ENCODE measurements at regions of chr6 and their contacts with region 1.

Region 1: DNA sequence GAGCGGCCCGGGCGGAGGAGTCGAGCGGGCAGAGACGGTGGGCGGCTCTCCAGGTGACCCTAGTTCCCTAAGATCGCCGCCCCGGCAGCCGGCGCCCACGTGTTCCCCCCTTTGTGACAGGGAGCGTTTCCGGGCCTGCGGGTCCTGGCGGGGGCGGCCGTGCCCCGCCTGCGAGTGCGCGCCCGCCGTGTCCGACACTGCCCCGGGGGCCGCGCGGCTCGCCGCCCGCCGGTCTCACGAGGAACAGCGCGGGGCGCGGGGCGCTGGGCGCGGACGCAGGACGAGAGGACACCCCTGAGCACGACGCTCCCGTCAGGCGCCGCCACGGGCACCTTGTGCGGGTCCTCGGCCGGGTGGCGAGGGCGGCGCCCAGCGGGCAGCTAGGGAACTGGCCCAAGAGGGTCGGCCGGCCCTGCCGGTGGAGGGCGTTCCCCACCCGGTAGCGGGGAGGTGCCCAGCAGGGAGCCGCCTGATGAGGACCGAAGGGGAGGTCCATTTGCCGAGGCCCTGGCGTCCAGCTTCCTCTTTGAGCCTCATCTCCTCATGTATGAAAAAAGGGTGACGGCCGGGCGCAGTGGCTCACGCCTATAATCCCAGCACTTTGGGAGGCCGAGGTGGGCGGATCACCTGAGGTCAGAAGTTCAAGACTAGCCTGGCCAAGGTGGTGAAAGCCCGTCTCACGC is at the start of gene VARS1:
- H3K4me3 Mint-ChIP-seq: peak within 1 kb of the TSS; percentile 95
- H3K27ac Mint-ChIP-seq: peak within 1 kb of the TSS; percentile 96
- H3K4me1 Mint-ChIP-seq: peaks cover 42% of the 10 kb centered on the region
- H3K27me3 Mint-ChIP-seq: no peaks in the 10 kb centered on the region

Region 2: GRCh38 chr6:31702819-31703522 is 92.8 kb before region 1 on chr6 and contains the start of gene ABHD16A:
- intact Hi-C with region 1: no loop called
- H3K4me3 Mint-ChIP-seq: peak within 1 kb of the TSS; percentile 98
- H3K27ac Mint-ChIP-seq: peak within 1 kb of the TSS; percentile 93
- H3K4me1 Mint-ChIP-seq: peaks cover 39% of the 10 kb centered on the region
- H3K27me3 Mint-ChIP-seq: no peaks in the 10 kb centered on the region

Region 3: DNA sequence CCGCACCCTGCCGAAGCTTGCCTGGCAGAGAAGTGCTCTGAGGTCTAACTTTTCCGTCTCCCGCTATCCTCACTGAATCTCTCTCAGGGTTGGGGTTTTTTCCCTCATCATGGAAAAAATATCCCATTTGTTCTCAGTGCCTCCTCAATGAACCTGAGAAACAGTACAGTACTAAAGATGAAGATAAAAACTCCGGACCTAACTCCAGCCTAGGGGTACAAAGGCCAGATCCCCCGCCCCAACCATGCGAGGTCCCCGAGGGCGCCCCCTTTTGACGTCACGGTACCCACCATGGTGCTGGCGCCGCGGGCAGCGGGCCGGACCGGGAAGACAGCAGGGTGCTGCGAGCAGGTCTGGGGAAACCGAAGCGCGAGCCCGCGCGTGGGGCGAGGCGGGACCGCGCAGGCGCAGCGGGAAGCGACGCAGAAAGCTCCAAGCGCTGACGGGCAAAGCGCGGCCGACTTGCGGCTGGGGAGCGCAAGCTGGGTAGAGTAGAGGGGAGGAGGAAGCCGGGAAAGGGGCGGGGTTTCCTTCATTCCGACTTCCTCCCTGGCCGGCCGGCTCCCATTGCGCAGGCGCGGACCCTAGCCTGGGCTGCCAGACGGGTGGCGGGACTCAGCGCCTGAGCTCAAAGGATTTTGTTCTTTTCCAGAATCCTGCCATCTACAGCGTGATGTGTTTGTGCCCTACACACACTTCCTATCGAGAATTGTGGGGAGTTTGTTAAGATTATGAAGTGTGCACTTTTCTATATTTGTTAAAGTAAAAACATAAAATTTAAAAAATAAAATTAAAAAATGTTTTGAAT is 10.9 kb after region 1 on chr6 and contains the start of gene LSM2:
- intact Hi-C with region 1: loop called (anchors 1 kb)
- H3K4me3 Mint-ChIP-seq: peak within 1 kb of the TSS; percentile 79
- H3K27ac Mint-ChIP-seq: peak within 1 kb of the TSS; percentile 93
- H3K4me1 Mint-ChIP-seq: peaks cover 28% of the 10 kb centered on the region
- H3K27me3 Mint-ChIP-seq: no peaks in the 10 kb centered on the region

Region 4: DNA sequence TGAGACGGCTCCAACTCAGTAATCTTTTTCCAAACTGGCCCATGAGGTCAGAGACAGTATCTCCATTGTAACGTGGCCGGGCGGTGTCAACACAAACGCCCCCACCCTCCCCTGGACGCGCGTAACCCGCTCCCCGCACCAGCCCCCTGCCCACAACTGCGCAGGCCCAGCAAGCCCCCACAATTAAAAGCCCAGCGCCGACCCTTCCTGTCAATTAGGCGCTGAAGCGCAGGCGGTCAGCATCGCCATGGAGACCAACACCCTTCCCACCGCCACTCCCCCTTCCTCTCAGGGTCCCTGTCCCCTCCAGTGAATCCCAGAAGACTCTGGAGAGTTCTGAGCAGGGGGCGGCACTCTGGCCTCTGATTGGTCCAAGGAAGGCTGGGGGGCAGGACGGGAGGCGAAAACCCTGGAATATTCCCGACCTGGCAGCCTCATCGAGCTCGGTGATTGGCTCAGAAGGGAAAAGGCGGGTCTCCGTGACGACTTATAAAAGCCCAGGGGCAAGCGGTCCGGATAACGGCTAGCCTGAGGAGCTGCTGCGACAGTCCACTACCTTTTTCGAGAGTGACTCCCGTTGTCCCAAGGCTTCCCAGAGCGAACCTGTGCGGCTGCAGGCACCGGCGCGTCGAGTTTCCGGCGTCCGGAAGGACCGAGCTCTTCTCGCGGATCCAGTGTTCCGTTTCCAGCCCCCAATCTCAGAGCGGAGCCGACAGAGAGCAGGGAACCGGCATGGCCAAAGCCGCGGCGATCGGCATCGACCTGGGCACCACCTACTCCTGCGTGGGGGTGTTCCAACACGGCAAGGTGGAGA is 19.5 kb after region 1 on chr6 and contains the starts of genes HSPA1A and HSPA1L:
- intact Hi-C with region 1: loop called (anchors 2 kb)
- H3K4me3 Mint-ChIP-seq: peak within 1 kb of the TSS; percentile 96
- H3K27ac Mint-ChIP-seq: peak within 1 kb of the TSS; percentile 98
- H3K4me1 Mint-ChIP-seq: peaks cover 46% of the 10 kb centered on the region
- H3K27me3 Mint-ChIP-seq: no peaks in the 10 kb centered on the region

Measured in dendritic cell treated with granulocyte-macrophage colony-stimulating factor and Interleukin-4, amounts not matched to agents 40 ng/mL and 50 ng/mL, for 4 days (primary cell).